GM18951 (cell line): ENCODE measurements at regions of chr12 and their contacts with region 1.

Region 1: DNA sequence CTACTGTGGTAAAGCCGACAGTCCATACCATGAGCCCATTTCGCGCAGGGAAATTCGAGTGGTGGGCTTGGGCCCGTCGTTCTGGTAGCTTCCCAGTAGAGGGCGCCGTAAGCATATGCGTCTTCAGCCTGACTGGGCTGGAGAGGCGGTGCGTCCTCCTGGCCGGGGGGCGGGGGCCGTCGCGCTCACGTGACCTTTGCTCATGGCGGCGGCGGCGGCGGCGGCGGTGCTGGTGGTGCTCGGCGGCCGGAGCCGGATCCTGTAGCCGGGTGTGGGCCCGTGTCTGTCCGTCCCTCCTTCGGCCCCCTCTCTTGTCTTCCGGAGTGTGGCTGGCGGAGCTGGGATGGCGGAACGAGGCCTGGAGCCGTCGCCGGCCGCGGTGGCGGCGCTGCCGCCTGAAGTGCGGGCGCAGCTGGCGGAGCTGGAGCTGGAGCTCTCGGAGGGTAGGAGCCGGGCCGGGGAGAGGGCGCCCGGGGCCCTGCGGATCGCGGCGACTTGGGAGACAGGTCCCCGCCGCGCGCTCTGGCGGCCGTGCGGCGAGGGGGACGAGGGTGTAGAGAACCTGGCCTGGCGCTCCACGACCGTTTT is at the start of gene DIP2B:
- POLR2A ChIP-seq: peak; percentile 77

Region 2: DNA sequence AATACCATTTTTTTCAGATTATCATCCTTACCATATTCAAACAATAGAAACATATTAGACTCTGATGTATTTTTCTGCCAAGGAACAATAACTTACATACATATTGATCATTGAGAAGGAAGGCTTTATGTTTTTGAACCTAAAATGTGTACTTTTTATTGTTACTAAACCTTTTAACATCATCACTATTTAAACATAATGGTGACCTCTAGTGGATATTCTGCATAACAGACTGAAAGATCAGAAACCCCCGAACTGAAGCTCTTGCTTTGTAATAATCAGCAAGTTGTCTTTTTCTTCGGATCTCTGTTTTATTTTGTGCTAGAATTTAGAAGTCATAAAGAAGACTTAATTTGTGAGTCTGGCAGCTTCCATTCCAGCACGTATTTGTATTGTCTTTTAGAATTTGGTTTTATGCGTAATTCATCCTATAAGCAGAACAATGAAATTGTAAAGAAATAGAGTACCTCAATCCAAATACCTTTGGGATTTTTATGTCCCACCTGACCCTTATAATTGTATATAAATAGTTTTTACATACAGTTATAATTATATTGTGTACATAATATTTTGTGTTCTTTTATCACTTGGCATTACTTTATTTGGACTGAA is 133.1 kb after region 1 on chr12:
- in situ Hi-C with region 1: loop called (anchors 5 kb)
- POLR2A ChIP-seq: no peak

Region 3: GRCh38 chr12:51009056-51009440 is 504.2 kb after region 1 on chr12:
- in situ Hi-C with region 1: loop called (anchors 25 kb)
- POLR2A ChIP-seq: no peak